HAP-1 (cell line): ENCODE measurements at regions of chr4 and their contacts with region 1.

Region 1: GRCh38 chr4:139651282-139652194 is 14.1 kb upstream of the MGST2 start:
- DNase-seq: peak; percentile 79 to 84
- H3K4me3 ChIP-seq: no peak overlapping the region
- H3K4me1 ChIP-seq: peaks cover 3% of the 10 kb centered on the region
- H3K27me3 ChIP-seq: no peaks in the 10 kb centered on the region

Region 2: GRCh38 chr4:139493176-139493575 is 158.4 kb before region 1 on chr4:
- in situ Hi-C with region 1: loop called (anchors 10 kb)
- DNase-seq: no peak
- H3K4me3 ChIP-seq: no peak overlapping the region
- H3K4me1 ChIP-seq: no peaks in the 10 kb centered on the region
- H3K27me3 ChIP-seq: no peaks in the 10 kb centered on the region

Region 3: GRCh38 chr4:139603576-139604387 is 47.8 kb before region 1 on chr4:
- in situ Hi-C with region 1: loop called (anchors 10 kb)
- DNase-seq: peak; percentile 74 to 75
- H3K4me3 ChIP-seq: no peak overlapping the region
- H3K4me1 ChIP-seq: peaks cover 38% of the 10 kb centered on the region
- H3K27me3 ChIP-seq: no peaks in the 10 kb centered on the region

Region 4: DNA sequence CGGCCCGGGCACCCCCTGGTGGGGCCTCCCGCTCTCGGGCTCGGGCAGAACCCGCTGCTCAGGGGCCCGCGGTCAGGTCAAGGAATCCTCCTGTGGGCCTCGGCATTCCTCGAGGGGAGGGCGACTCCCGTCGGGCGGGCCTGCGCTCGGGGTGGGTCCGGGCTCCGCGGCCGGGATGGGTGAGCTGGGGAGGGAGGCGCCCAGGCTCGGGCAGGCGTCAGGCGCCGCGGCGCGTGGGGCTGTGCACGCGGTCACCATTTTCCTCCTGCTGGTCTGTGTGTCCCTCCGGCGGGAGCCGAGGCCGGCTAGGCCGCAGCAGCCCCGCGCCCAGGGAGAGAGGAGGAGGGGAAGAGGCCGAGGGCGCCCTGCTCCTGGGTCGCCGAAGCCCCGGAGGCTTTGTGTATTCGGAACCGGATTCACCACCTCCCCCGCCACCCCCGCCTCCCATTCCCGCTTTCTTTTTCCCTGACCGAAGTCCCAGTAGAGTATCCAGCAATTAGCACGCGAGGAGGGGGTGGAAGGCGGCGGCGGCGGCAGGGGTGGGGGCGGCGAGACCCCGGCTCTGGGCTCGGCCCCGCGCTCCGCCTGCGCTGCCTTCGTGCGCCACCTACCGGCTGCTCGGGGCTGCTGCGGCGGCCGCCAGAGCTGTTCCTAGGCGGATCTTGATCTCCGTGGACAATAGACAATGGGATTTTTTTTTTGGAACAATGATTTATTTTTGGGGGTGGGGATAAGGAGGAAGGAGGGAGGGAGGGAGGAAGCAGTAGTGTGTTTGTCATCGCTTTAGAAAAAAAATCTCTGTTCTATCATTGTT is 601.4 kb after region 1 on chr4:
- in situ Hi-C with region 1: loop called (anchors 10 kb)
- DNase-seq: peak; percentile 87
- H3K4me3 ChIP-seq: peak overlapping the region; percentile 30
- H3K4me1 ChIP-seq: peaks cover 13% of the 10 kb centered on the region
- H3K27me3 ChIP-seq: no peaks in the 10 kb centered on the region